Dendritic cell treated with granulocyte-macrophage colony-stimulating factor and Interleukin-4, amounts not matched to agents 40 ng/mL and 50 ng/mL, for 4 days (primary cell): ENCODE measurements at regions of chr16 and their contacts with region 1.

Region 1: GRCh38 chr16:69563605-69564580 is 1.9 kb upstream of the NFAT5 start:
- H3K4me3 Mint-ChIP-seq: peak overlapping the region; percentile 50
- H3K27ac Mint-ChIP-seq: peak overlapping the region; percentile 96
- H3K4me1 Mint-ChIP-seq: peaks cover 34% of the 10 kb centered on the region
- H3K27me3 Mint-ChIP-seq: peaks cover 22% of the 10 kb centered on the region

Region 2: DNA sequence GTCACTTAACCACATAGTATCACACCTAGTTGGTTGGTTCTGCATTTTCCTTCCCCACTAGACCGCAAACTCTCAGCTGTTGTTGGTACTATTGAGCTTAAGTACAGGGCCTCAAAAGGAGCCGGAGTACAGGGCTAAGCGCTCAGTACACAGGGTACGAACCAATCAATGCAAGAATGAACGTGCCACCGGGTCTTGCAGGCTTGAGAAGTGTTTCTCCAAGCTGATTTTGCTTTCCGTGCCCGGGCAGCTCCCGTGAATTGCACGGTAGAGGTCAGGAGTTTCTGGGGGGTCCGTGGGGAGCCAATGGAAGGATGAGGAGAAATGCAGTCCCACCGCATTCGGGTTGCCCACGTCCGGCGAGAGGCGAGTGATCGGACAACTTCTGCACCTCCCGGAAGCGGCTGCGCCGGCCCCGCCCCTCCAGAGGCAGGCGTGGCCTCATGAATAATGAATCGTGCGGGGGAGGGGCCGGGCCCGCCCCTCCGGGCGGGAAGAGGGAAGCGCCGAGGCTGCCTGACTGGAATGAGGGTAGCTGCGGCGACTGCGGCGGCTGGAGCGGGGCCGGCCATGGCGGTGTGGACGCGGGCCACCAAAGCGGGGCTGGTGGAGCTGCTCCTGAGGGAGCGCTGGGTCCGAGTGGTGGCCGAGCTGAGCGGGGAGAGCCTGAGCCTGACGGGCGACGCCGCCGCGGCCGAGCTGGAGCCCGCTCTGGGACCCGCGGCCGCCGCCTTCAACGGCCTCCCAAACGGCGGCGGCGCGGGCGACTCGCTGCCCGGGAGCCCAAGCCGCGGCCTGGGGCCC is 377.0 kb before region 1 on chr16 and contains the start of gene SNTB2:
- intact Hi-C with region 1: no loop called
- H3K4me3 Mint-ChIP-seq: peak within 1 kb of the TSS; percentile 90
- H3K27ac Mint-ChIP-seq: peak within 1 kb of the TSS; percentile 91
- H3K4me1 Mint-ChIP-seq: peaks cover 35% of the 10 kb centered on the region
- H3K27me3 Mint-ChIP-seq: peaks cover 46% of the 10 kb centered on the region

Region 3: GRCh38 chr16:69396187-69397061 is 167.5 kb before region 1 on chr16:
- intact Hi-C with region 1: loop called (anchors 5 kb)
- H3K4me3 Mint-ChIP-seq: no peak overlapping the region
- H3K27ac Mint-ChIP-seq: no peak overlapping the region
- H3K4me1 Mint-ChIP-seq: peaks cover 35% of the 10 kb centered on the region
- H3K27me3 Mint-ChIP-seq: peaks cover 41% of the 10 kb centered on the region

Region 4: GRCh38 chr16:69494993-69495392 is 68.9 kb before region 1 on chr16:
- intact Hi-C with region 1: loop called (anchors 5 kb)
- H3K4me3 Mint-ChIP-seq: no peak overlapping the region
- H3K27ac Mint-ChIP-seq: no peak overlapping the region
- H3K4me1 Mint-ChIP-seq: no peaks in the 10 kb centered on the region
- H3K27me3 Mint-ChIP-seq: peaks cover 83% of the 10 kb centered on the region

Region 5: GRCh38 chr16:69526831-69527655 is 36.9 kb before region 1 on chr16:
- intact Hi-C with region 1: loop called (anchors 5 kb)
- H3K4me3 Mint-ChIP-seq: no peak overlapping the region
- H3K27ac Mint-ChIP-seq: no peak overlapping the region
- H3K4me1 Mint-ChIP-seq: peaks cover 20% of the 10 kb centered on the region
- H3K27me3 Mint-ChIP-seq: peaks cover 53% of the 10 kb centered on the region

Region 6: GRCh38 chr16:69595127-69596036 is 31.5 kb after region 1 on chr16:
- intact Hi-C with region 1: no loop called
- H3K4me3 Mint-ChIP-seq: no peak overlapping the region
- H3K27ac Mint-ChIP-seq: no peak overlapping the region
- H3K4me1 Mint-ChIP-seq: peaks cover 16% of the 10 kb centered on the region
- H3K27me3 Mint-ChIP-seq: no peaks in the 10 kb centered on the region